GM12878 (cell line): ENCODE measurements at regions of chr4 and their contacts with region 1.

Region 1: DNA sequence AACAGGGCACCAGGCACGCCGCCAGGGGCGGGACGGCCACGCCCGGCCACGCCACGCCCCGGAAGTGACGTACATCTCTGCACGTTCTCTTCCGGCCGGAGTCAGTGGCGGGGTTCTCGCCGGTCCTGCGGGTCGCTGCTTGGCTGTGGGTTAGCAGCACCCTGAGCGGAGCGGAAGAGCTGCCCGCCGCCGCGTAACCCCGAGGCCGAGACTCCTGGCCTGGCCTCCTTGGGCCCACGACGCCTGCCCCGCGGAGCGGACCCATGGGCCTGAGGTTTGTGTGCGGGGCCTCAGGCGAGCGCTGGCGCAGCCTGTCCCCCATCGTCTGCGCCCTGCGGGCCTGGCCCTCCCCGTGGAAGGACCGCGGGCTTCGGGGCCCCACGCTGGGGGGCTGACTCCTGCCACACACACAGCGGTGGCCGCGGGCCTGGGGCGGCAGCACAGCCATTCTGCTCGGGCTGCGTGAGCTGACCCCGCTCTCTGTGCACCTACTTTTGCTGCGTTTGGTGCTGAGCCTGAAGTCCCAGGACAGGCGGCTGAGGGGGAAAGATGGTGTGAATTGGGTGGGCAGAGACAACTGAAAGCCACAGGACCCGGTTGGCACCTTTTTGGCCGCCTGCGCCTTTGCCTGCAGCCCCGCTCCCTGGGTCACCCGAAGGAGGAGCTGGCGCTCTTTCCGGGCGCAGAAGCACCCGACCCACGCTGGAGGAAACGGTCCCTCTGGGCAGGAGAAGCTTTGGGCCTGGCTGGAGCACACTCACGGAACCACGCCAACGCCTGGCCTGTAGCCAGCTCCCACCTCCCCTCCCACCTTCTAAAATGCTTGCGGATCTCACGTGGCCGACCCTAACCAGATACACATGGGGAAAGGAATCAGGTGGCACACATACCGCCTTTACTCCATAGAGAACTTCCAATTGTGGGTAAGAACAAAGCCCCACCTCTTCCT is 28.1 kb downstream of the NOP14 start:
- DNase-seq: peak; percentile 80
- ATAC-seq: peak; percentile 48
- H3K4me3 ChIP-seq: peak overlapping the region; percentile 97
- H3K27ac ChIP-seq: peak overlapping the region; percentile 74
- H3K4me1 ChIP-seq: peaks cover 42% of the 10 kb centered on the region
- H3K27me3 ChIP-seq: no peaks in the 10 kb centered on the region
- CTCF ChIP-seq: 0 out of 6 replicates have a peak, but pooled peaks of 1 of the 3 experiments have one; percentile 12
- EP300 ChIP-seq: no peak
- POLR2A ChIP-seq: no peak
- RAD21 ChIP-seq: no peak

Region 2: DNA sequence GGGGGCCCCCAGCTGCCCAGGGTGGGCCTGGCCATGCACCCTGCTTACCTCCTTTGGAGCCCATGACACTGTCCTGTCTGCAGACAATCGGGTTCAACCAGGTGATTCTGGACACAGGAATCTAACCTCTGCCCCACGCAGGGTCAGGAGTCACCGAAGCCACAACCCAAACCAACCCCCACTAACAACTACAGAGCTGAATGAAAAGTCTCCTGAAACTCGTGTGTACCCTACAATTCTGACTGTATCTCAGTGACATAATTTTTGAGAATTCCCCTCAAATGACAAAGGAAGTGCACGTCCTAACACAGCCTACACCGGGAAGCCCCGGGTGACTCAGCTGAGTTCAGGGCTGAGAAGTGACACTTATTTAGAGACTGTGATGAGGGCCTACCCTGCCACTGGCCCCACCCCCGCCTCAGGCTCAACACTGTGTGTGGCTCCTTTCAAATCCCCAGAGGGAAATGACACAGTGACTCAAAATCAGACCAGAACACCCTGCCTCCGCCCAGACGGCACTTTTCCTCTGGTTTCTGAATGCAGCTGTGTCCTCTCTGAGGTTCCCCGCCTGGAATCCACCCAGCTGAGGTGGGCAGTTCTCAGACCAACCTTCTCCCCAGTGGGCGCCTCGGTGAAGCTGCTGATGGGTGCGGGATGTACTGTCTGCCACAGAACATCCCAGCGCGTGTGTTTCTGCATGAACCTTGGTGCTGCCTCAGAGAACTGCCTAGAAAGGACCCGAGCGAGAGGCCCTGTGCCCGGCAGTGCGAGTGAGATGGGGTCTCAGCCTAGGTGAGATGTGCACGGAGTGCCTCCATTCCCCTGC is 188.9 kb before region 1 on chr4:
- CTCF ChIA-PET with region 1: interaction called, 8 read pairs
- POLR2A ChIA-PET with region 1: interaction called, 7 read pairs
- RAD21 ChIA-PET with region 1: interaction called, 15 read pairs
- SMC1A ChIA-PET with region 1: no interaction called
- in situ Hi-C with region 1: loop called (anchors 25 kb)
- intact Hi-C with region 1: loop called (anchors 2 kb)
- DNase-seq: peak; percentile 98
- ATAC-seq: peak; percentile 93
- H3K4me3 ChIP-seq: peak overlapping the region; percentile 22
- H3K27ac ChIP-seq: peak overlapping the region; percentile 98
- H3K4me1 ChIP-seq: peaks cover 47% of the 10 kb centered on the region
- H3K27me3 ChIP-seq: no peaks in the 10 kb centered on the region
- CTCF ChIP-seq: no peak
- EP300 ChIP-seq: peak; percentile 89 to 98
- POLR2A ChIP-seq: peak; percentile 58; the same call in 1 of the 2 replicates
- RAD21 ChIP-seq: no peak

Region 3: DNA sequence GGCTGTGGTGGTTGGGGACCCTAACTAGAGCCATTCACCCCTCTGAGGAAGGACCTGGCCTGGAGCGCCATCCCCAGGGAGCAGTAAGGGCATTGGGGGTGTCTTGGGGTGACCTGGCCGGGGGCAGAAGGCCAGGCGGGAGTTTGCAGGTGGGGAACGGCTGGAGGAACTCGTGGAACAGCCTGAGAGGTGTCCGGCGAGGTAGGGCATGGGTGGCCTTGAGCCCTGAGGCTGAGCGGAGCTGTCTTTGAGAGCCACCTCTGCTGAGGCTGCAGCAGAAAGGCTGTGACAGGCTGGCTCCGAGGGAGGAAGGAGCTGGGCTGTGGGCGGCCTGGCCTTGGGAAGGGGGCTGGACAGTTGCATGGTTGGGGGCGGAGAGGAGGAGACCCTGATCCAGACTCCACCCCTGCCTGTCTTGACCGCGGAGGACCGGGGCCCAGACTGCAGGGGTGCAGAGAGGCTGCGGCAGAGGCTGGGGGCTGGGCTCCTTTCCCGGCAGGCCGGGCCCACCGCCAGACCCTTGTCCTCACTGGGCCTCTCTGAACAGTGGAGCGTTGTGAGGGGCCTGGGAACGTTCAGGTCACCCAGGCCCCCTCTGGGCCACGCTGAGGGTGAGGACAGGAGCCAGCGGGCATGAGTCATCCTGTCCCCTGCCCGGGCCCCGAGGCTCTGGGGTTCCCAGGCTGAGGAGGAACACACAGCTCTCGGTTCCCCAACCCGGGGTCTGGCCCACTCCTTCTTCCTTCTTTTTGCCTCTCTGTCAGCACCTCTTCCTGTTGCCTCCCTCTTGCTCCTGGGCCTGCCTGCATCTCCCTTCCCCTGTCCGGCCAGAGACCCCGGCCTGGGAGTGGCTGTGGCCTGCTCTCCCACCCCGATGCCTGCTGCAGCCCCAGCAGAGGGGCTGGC is 134.1 kb before region 1 on chr4:
- CTCF ChIA-PET with region 1: no interaction called
- POLR2A ChIA-PET with region 1: interaction called, 18 read pairs
- RAD21 ChIA-PET with region 1: no interaction called
- SMC1A ChIA-PET with region 1: interaction called, 3 read pairs
- in situ Hi-C with region 1: no loop called
- intact Hi-C with region 1: no loop called
- DNase-seq: peak; percentile 41
- ATAC-seq: peak; percentile 78
- H3K4me3 ChIP-seq: peak overlapping the region; percentile 77
- H3K27ac ChIP-seq: peak overlapping the region; percentile 82
- H3K4me1 ChIP-seq: peaks cover 62% of the 10 kb centered on the region
- H3K27me3 ChIP-seq: no peaks in the 10 kb centered on the region
- CTCF ChIP-seq: no peak
- EP300 ChIP-seq: 0 out of 4 replicates have a peak, but pooled peaks of 1 of the 2 experiments have one; percentile 43
- POLR2A ChIP-seq: no peak
- RAD21 ChIP-seq: no peak

Region 4: DNA sequence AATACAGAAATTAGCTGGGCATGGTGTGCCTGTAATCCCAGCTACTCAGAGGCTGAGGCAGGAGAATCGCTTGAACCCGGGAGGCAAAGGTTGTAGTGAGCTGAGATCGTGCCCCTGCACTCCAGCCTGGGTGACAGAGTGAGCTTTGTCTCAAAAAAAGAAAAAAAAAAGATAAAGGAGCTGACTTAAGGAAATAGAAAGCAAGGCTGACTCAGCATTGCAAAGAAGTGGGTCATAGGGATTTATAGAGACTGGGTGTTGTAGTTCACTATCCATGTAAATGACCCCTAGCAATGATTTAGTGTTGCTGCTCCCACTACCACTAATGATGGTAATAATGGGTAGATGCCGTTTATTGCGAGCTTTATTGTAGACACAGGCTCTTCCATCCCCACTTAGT is 43.8 kb before region 1 on chr4:
- CTCF ChIA-PET with region 1: no interaction called
- POLR2A ChIA-PET with region 1: no interaction called
- RAD21 ChIA-PET with region 1: no interaction called
- SMC1A ChIA-PET with region 1: no interaction called
- in situ Hi-C with region 1: no loop called
- intact Hi-C with region 1: no loop called
- DNase-seq: no peak
- ATAC-seq: no peak
- H3K4me3 ChIP-seq: no peak overlapping the region
- H3K27ac ChIP-seq: no peak overlapping the region
- H3K4me1 ChIP-seq: no peaks in the 10 kb centered on the region
- H3K27me3 ChIP-seq: no peaks in the 10 kb centered on the region
- CTCF ChIP-seq: no peak
- EP300 ChIP-seq: no peak
- POLR2A ChIP-seq: no peak
- RAD21 ChIP-seq: no peak

Region 5: GRCh38 chr4:2948895-2949765 is 14.0 kb after region 1 on chr4:
- CTCF ChIA-PET with region 1: interaction called, 62 read pairs
- POLR2A ChIA-PET with region 1: interaction called, 20 read pairs
- RAD21 ChIA-PET with region 1: interaction called, 52 read pairs
- SMC1A ChIA-PET with region 1: interaction called, 65 read pairs
- in situ Hi-C with region 1: no loop called
- intact Hi-C with region 1: loop called (anchors 1 kb)
- DNase-seq: no peak
- ATAC-seq: peak; percentile 78
- H3K4me3 ChIP-seq: no peak overlapping the region
- H3K27ac ChIP-seq: no peak overlapping the region
- H3K4me1 ChIP-seq: peaks cover 6% of the 10 kb centered on the region; the same call in 1 of the 2 replicates
- H3K27me3 ChIP-seq: no peaks in the 10 kb centered on the region
- CTCF ChIP-seq: peak; percentile 37 to 45 (median 39); a peak in 3 of 6 replicates
- EP300 ChIP-seq: no peak
- POLR2A ChIP-seq: no peak
- RAD21 ChIP-seq: 0 out of 2 replicates have a peak, but pooled peaks have one; percentile 9

Region 6: GRCh38 chr4:2963175-2963965 is 28.3 kb after region 1 on chr4 and contains the starts of genes GRK4 and NOP14:
- CTCF ChIA-PET with region 1: interaction called, 6 read pairs
- POLR2A ChIA-PET with region 1: interaction called, 22 read pairs
- RAD21 ChIA-PET with region 1: interaction called, 35 read pairs
- SMC1A ChIA-PET with region 1: interaction called, 19 read pairs
- in situ Hi-C with region 1: no loop called
- intact Hi-C with region 1: loop called (anchors 1 kb)
- DNase-seq: peak; percentile 92
- ATAC-seq: peak; percentile 92
- H3K4me3 ChIP-seq: peak within 1 kb of the TSS; percentile 78
- H3K27ac ChIP-seq: peak within 1 kb of the TSS; percentile 91
- H3K4me1 ChIP-seq: peaks cover 15% of the 10 kb centered on the region
- H3K27me3 ChIP-seq: no peaks in the 10 kb centered on the region
- CTCF ChIP-seq: peak in 2 of 3 experiments; percentile 9 to 23; a peak in 3 of 6 replicates
- EP300 ChIP-seq: 0 out of 4 replicates have a peak, but pooled peaks of 1 of the 2 experiments have one; percentile 22
- POLR2A ChIP-seq: peak; percentile 90
- RAD21 ChIP-seq: no peak
- polyA plus RNA-seq, gene GRK4: 1.1 to 1.6 TPM
- polyA plus RNA-seq, gene NOP14: 13.8 to 24.7 TPM